Naive thymus-derived CD4-positive, alpha-beta T cell (primary cell): ENCODE measurements at regions of chr11 and their contacts with region 1.

Region 1: GRCh38 chr11:28243581-28243980 is 135.4 kb downstream of the METTL15 start:
- DNase-seq: no peak
- ATAC-seq: no peak
- H3K4me3 ChIP-seq: no peak overlapping the region
- H3K4me3 Mint-ChIP-seq: no peak overlapping the region
- H3K27ac ChIP-seq: no peak overlapping the region
- H3K27ac Mint-ChIP-seq: no peak overlapping the region
- H3K4me1 ChIP-seq: no peaks in the 10 kb centered on the region
- H3K4me1 Mint-ChIP-seq: peaks cover 0 to 8% (median 0%) of the 10 kb centered on the region in 7 donors
- H3K27me3 ChIP-seq: no peaks in the 10 kb centered on the region
- H3K27me3 Mint-ChIP-seq: no peaks in the 10 kb centered on the region

Region 2: DNA sequence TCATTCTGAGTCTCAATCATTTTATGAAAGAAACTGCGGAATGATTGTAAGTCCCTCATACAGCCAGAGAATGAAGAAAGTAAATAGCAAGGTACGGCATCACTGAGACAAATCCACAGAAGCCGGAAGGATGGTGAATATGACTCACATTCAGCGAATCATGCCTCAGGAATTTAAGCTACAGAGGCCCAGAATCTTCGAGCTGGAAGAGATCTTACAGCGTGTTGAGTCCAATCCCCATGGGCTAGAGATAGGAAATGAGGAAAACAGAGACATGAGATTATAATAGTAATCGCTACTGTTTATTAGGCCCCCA is 308.8 kb before region 1 on chr11:
- CTCF ChIA-PET with region 1: no interaction called
- POLR2A ChIA-PET with region 1: no interaction called
- intact Hi-C with region 1: no loop called
- DNase-seq: no peak
- ATAC-seq: no peak
- H3K4me3 ChIP-seq: no peak overlapping the region
- H3K4me3 Mint-ChIP-seq: no peak overlapping the region
- H3K27ac ChIP-seq: no peak overlapping the region
- H3K27ac Mint-ChIP-seq: no peak overlapping the region
- H3K4me1 ChIP-seq: no peaks in the 10 kb centered on the region
- H3K4me1 Mint-ChIP-seq: no peaks in the 10 kb centered on the region
- H3K27me3 ChIP-seq: no peaks in the 10 kb centered on the region
- H3K27me3 Mint-ChIP-seq: peaks cover 0 to under 1% (median 0%) of the 10 kb centered on the region in 5 donors

Region 3: DNA sequence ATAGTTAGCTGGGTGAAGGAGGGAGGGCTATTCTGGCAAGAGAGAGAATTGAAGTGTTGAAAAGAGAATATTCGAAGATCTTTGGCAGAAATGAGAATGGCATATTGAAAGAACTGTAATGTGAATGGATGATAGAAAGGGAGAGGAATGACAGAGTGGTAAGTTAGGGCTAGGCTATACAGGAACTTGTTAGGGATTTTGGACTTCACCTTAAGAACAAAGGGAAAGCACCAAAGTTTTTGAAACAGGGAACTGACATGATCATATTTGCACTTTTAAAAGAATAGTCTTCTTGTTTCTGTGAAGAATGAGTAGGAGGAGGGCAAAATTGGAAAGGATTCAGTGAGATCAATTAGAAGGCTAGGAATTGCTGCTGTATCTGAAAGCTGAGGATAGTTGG is 16.1 kb before region 1 on chr11:
- CTCF ChIA-PET with region 1: no interaction called
- POLR2A ChIA-PET with region 1: no interaction called
- intact Hi-C with region 1: loop called in 1 of 2 experiments (anchors 2 kb)
- DNase-seq: no peak
- ATAC-seq: no peak
- H3K4me3 ChIP-seq: no peak overlapping the region
- H3K4me3 Mint-ChIP-seq: no peak overlapping the region
- H3K27ac ChIP-seq: no peak overlapping the region
- H3K27ac Mint-ChIP-seq: no peak overlapping the region
- H3K4me1 ChIP-seq: no peaks in the 10 kb centered on the region
- H3K4me1 Mint-ChIP-seq: peaks cover 0 to 18% (median 8%) of the 10 kb centered on the region in 7 donors
- H3K27me3 ChIP-seq: no peaks in the 10 kb centered on the region
- H3K27me3 Mint-ChIP-seq: no peaks in the 10 kb centered on the region

Region 4: GRCh38 chr11:28274216-28274615 is 30.6 kb after region 1 on chr11:
- CTCF ChIA-PET with region 1: no interaction called
- POLR2A ChIA-PET with region 1: no interaction called
- intact Hi-C with region 1: no loop called
- DNase-seq: no peak
- ATAC-seq: no peak
- H3K4me3 ChIP-seq: no peak overlapping the region
- H3K4me3 Mint-ChIP-seq: no peak overlapping the region
- H3K27ac ChIP-seq: no peak overlapping the region
- H3K27ac Mint-ChIP-seq: no peak overlapping the region
- H3K4me1 ChIP-seq: no peaks in the 10 kb centered on the region
- H3K4me1 Mint-ChIP-seq: peaks cover 0 to 5% (median 0%) of the 10 kb centered on the region in 7 donors
- H3K27me3 ChIP-seq: no peaks in the 10 kb centered on the region
- H3K27me3 Mint-ChIP-seq: no peaks in the 10 kb centered on the region